Activated CD8-positive, alpha-beta memory T cell treated with anti-CD3 and anti-CD28 coated beads, Interleukin-2, amount 10 ng/mL, durations not matched to agents 7 days and 5 days (primary cell): ENCODE measurements at regions of chr14 and their contacts with region 1.

Region 1: DNA sequence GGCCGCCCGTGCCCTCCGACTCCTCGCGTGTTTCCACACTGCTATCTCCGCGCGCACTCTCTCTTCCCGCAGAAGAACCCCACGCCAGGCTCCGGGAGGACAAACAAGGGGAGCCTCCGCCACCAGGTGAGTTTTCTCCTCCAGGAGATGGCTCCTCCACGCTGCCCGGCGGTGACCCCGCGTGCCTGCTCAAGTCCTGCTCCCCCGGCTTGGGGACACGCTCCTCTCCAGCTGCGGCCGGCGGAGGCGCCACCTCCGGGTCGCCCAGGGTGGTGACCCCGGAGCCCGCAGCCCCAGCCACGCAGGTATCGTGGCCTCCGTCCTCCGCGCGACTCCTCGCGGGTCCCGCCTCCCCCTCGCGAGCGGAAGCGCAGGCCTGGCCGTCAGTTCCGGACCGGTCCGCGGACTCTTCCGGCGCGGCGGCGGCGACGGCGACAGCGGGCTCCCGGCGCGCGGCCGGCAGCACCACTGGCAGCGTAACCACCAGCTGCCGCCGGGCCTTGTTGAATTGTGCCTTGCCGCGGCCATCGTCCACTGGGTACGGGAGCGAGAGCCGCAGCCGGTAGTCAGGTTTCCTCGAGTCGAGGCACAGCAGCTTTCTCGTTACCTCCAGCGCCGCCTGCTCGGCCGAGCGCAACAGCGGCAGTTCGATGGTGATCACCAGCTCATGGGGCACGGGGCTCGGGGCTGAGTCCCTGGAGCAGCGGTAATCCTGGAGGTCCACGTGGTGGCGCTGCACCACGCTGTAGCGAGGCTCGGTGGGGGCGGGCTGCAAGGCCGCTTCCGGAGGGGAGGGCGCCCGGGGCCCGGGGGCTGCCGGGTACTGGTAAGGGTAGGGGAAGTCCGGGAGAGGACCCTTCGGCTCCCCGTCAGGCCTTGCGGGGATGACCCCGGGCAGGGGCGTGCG is 1.2 kb downstream of the DNAAF2 start:
- DNase-seq: peak; percentile 96
- ATAC-seq: peak; percentile 83
- H3K4me3 Mint-ChIP-seq: peak overlapping the region; percentile 87
- H3K27ac Mint-ChIP-seq: peak overlapping the region; percentile 94
- H3K4me1 Mint-ChIP-seq: peaks cover 47% of the 10 kb centered on the region
- H3K27me3 Mint-ChIP-seq: no peaks in the 10 kb centered on the region

Region 2: GRCh38 chr14:49620182-49621113 is 13.4 kb before region 1 on chr14 and contains the starts of genes MGAT2 and RPL36AL:
- CTCF ChIA-PET with region 1: interaction called, 34 read pairs
- DNase-seq: peak; percentile 98
- ATAC-seq: peak; percentile 88
- H3K4me3 Mint-ChIP-seq: peak within 1 kb of the TSS; percentile 84
- H3K27ac Mint-ChIP-seq: peak within 1 kb of the TSS; percentile 92
- H3K4me1 Mint-ChIP-seq: peaks cover 46% of the 10 kb centered on the region
- H3K27me3 Mint-ChIP-seq: no peaks in the 10 kb centered on the region
- total RNA-seq, gene MGAT2: 68.4 to 75.9 TPM
- total RNA-seq, gene RPL36AL: 245 to 248 TPM

Region 3: DNA sequence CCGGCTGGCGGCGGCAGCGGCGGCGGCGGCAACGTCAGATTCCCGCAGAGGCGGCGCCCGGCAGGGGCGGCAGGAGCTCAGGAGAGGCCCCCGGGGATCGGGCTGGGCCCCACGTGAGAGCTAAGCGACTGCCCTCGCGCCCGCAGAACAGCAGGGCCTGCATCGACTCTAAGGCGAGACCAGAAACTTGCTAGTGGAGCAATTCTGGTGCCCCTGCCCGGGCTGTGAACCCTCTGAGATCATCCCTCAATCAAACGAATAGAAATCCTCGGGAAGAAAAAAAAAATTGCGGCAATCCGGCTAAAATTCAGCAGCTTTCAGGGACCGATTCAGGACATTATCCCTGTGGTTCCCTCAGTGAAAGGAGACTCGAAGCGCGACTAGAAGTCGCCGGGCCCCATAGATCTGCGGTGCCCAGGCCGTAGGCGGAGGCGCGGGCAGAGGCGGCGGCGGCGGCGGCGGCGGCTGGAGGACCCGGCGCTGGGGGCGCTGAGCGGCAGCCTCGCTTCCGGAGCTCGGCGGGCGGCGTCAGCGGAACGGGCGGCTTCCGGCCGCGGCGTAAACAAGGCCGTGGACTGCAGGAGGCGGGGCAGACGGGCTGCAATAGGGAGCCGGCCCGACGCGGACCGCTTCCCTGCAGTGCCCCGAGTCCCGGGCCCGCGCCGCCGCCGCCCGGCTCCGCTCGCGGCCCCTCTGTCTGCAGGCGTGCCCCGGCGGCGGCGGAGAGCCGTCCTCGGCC is 133.8 kb after region 1 on chr14 and contains the start of gene KLHDC2:
- CTCF ChIA-PET with region 1: interaction called, 25 read pairs
- DNase-seq: peak; percentile 94
- ATAC-seq: peak; percentile 88
- H3K4me3 Mint-ChIP-seq: peak within 1 kb of the TSS; percentile 90
- H3K27ac Mint-ChIP-seq: peak within 1 kb of the TSS; percentile 97
- H3K4me1 Mint-ChIP-seq: peaks cover 31% of the 10 kb centered on the region
- H3K27me3 Mint-ChIP-seq: no peaks in the 10 kb centered on the region
- total RNA-seq, gene KLHDC2: 25.3 to 32.3 TPM

Region 4: GRCh38 chr14:49820176-49820575 is 186.3 kb after region 1 on chr14:
- CTCF ChIA-PET with region 1: interaction called, 18 read pairs
- DNase-seq: no peak
- ATAC-seq: no peak
- H3K4me3 Mint-ChIP-seq: no peak overlapping the region
- H3K27ac Mint-ChIP-seq: no peak overlapping the region
- H3K4me1 Mint-ChIP-seq: no peaks in the 10 kb centered on the region
- H3K27me3 Mint-ChIP-seq: no peaks in the 10 kb centered on the region

Region 5: DNA sequence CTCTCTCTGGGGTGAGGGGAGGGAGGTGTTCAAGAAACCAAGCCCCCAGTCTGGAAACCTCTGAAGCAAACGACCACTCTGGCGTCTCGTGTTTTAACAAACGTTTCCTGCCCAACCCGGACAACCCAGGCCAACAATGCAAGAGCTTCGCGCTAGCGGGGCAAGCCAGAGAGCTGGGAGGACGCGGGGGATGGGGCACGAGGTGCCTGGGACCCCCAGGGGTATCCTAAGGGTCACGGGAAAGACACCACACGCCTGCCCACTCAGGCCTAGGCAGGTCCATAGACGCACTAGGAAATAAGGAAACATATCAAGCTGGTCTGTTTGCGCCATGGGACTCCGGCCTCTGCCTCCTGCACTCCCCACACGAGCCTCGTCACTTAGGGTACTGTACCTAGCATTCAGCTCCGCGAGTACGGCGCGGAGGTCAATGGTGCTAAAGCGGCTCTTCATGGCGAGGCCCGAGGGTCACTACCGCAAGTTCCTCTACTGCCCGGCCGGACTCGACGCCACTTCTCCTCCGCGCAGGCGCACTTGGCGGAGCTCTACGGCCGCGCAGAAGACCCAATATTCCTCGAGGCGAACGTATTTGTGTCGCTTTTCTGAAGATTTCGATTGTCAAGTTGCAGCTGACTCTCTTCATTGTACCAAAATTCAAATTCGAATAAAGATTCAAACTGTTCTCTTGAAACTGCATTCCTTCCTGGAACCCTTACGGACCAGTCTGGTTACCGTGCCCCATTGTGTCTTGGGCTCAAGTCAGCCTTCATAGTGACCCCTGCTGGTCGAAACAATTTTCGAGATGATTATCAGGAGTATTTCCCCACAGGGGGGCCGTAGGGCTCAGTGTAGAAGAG is 218.6 kb after region 1 on chr14 and contains the start of gene NEMF:
- CTCF ChIA-PET with region 1: interaction called, 28 read pairs
- DNase-seq: peak; percentile 88
- ATAC-seq: peak; percentile 86
- H3K4me3 Mint-ChIP-seq: peak within 1 kb of the TSS; percentile 92
- H3K27ac Mint-ChIP-seq: peak within 1 kb of the TSS; percentile 96
- H3K4me1 Mint-ChIP-seq: peaks cover 43% of the 10 kb centered on the region
- H3K27me3 Mint-ChIP-seq: no peaks in the 10 kb centered on the region
- total RNA-seq, gene NEMF: 78.7 to 82.8 TPM